PC-9 (cell line): ENCODE measurements at regions of chr2 and their contacts with region 1.

Region 1: GRCh38 chr2:43169987-43170386 is 56.4 kb downstream of the ZFP36L2 start:
- DNase-seq: peak; percentile 38 to 50
- H3K4me3 ChIP-seq: peak overlapping the region; percentile 53; the same call in 1 of the 2 replicates
- H3K27ac ChIP-seq: peak overlapping the region; percentile 97
- H3K4me1 ChIP-seq: peaks cover 74% of the 10 kb centered on the region
- H3K27me3 ChIP-seq: no peaks in the 10 kb centered on the region
- CTCF ChIP-seq: peak; percentile 96

Region 2: DNA sequence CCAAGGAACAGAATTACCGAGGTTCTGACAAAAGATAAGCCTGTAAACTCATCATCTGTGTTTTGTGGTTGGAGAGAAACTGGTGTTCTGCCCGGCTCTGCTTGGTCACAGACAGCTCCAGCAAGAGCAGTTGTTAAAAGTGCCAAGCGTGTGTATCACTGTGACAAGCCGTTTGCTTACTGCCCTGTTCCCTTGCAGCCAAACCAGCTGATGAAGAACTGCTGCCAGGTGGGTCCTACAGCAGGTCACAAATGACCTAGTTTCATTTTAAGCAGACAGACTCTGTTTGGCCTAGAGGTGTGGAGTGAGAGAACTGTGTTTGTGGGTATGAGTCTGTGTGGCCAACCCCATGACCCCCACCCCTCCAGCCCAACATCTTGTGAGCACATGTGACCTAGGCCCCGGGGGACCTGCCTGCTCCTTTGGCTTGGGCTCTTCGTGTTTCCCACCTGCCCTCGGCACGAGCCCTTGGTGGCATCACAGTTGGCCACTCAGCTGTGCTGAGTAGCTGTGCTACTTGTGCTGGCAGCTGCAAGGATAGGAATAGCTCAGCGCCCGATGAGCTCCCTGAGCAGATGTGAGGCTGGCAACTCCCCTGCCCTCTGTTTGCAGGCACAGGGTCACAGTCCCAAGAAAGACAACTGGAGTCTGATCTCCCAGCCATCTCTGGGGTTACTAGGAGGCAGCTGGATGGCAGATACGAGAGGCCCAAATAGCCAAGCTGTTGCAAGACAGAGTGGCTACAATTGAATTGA is 415.8 kb before region 1 on chr2:
- CTCF ChIA-PET with region 1: no interaction called
- POLR2A ChIA-PET with region 1: no interaction called
- intact Hi-C with region 1: no loop called
- DNase-seq: no peak
- H3K4me3 ChIP-seq: no peak overlapping the region
- H3K27ac ChIP-seq: no peak overlapping the region
- H3K4me1 ChIP-seq: no peaks in the 10 kb centered on the region
- H3K27me3 ChIP-seq: no peaks in the 10 kb centered on the region
- CTCF ChIP-seq: no peak

Region 3: GRCh38 chr2:43105586-43106558 is 64.1 kb before region 1 on chr2:
- CTCF ChIA-PET with region 1: no interaction called
- POLR2A ChIA-PET with region 1: no interaction called
- intact Hi-C with region 1: loop called (anchors 2 kb)
- DNase-seq: no peak
- H3K4me3 ChIP-seq: no peak overlapping the region
- H3K27ac ChIP-seq: no peak overlapping the region
- H3K4me1 ChIP-seq: peaks cover 20% of the 10 kb centered on the region
- H3K27me3 ChIP-seq: no peaks in the 10 kb centered on the region
- CTCF ChIP-seq: peak; percentile 49

Region 4: DNA sequence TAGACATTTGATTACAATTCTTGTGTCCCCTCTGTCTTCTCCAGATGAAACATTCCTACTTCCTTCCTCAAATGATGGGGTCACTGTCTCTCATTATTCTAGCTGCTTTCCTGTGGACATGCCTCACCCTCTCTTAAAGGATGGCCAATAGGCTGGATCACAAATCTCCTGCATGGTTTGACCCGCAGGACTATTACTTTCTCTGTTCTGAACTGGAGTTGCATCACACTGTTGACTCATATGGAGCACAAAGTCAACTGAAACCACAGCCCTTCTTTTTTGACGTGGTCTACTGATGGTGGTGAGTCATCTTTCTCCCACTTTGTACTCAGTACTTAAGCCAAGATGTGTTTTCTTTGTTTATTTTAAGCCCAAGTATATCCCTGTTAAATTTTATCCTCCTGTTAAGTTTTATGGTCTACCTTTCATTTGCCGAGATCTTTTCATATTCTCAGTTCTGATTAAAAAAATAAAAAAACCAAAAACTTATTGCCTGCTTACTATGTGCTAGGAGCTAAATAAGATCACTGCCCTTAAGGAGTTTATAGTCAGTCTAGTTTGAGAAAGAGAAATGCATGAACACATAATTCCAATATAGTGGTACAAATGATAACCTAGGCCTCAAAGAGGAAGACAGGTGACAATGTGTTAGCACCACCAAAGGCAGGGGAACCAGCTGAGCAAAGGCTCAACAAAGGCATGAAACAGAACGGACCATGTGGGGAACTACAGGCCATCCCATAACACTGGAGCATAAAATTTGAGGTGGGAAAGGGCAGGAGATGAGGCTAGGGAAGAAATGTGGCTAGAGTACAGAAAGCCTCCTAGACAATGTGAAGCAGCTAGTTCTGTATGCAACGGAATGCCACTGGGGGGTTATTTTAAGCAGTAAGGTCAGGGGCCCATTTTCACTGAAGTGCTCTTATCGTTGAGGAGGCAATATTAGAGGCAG is 124.0 kb after region 1 on chr2:
- CTCF ChIA-PET with region 1: no interaction called
- POLR2A ChIA-PET with region 1: no interaction called
- intact Hi-C with region 1: no loop called
- DNase-seq: peak; percentile 54 to 96
- H3K4me3 ChIP-seq: no peak overlapping the region
- H3K27ac ChIP-seq: peak overlapping the region; percentile 87
- H3K4me1 ChIP-seq: peaks cover 25% of the 10 kb centered on the region
- H3K27me3 ChIP-seq: no peaks in the 10 kb centered on the region
- CTCF ChIP-seq: no peak